B cell (primary cell): ENCODE measurements at regions of chrX and their contacts with region 1.

Region 1: GRCh38 chrX:23742697-23743622 is at the start of gene ACOT9:
- DNase-seq: peak; percentile 86
- ATAC-seq: peak; percentile 95
- H3K4me3 ChIP-seq: peak within 1 kb of the TSS; percentile 36 to 80 (median 75)
- H3K4me3 Mint-ChIP-seq: peak within 1 kb of the TSS; percentile 91
- H3K27ac ChIP-seq: peak within 1 kb of the TSS; percentile 86 to 87
- H3K27ac Mint-ChIP-seq: peak within 1 kb of the TSS; percentile 90
- H3K4me1 ChIP-seq: peaks cover 3 to 12% of the 10 kb centered on the region in 2 donors
- H3K4me1 Mint-ChIP-seq: peaks cover 31% of the 10 kb centered on the region
- H3K27me3 ChIP-seq: no peaks in the 10 kb centered on the region
- H3K27me3 Mint-ChIP-seq: no peaks in the 10 kb centered on the region
- CTCF ChIP-seq: no peak
- total RNA-seq, gene ACOT9: 31.3 and 33.6 TPM in 2 replicates

Region 2: DNA sequence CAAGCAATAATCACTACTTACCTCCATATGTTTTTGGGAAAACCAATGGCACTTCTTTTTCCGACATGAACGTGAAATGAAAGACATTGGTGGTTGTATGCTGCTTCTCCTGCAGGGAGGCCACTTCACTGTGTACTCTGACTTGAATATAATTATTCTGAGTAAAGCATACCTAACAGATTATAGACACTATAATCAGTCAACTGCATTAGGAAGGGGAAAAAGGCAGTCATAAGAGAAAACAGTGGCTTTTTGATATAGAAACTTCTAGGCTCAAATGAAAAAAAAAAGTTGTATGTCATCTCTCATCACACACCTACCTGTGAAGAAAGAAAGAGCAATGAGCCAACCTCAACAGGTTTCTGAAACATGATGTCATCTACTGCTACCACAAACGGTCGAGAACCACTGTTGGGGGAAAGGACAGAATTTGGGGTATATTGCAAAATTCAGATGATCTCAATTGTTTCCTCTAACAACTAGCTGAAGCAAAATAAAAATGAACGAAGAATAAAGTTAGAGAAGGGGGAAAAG is 38.2 kb before region 1 on chrX:
- CTCF ChIA-PET with region 1: no interaction called
- POLR2A ChIA-PET with region 1: no interaction called
- intact Hi-C with region 1: no loop called
- DNase-seq: no peak
- ATAC-seq: no peak
- H3K4me3 ChIP-seq: no peak overlapping the region
- H3K4me3 Mint-ChIP-seq: no peak overlapping the region
- H3K27ac ChIP-seq: no peak overlapping the region
- H3K27ac Mint-ChIP-seq: no peak overlapping the region
- H3K4me1 ChIP-seq: no peaks in the 10 kb centered on the region
- H3K4me1 Mint-ChIP-seq: no peaks in the 10 kb centered on the region
- H3K27me3 ChIP-seq: no peaks in the 10 kb centered on the region
- H3K27me3 Mint-ChIP-seq: no peaks in the 10 kb centered on the region
- CTCF ChIP-seq: no peak

Region 3: GRCh38 chrX:23756157-23756559 is 13.2 kb after region 1 on chrX:
- CTCF ChIA-PET with region 1: interaction called, 5 read pairs
- POLR2A ChIA-PET with region 1: no interaction called
- intact Hi-C with region 1: loop called (anchors 1 kb)
- DNase-seq: peak; percentile 80
- ATAC-seq: peak; percentile 41
- H3K4me3 ChIP-seq: no peak overlapping the region
- H3K4me3 Mint-ChIP-seq: peak overlapping the region; percentile 45
- H3K27ac ChIP-seq: no peak overlapping the region
- H3K27ac Mint-ChIP-seq: peak overlapping the region; percentile 56
- H3K4me1 ChIP-seq: peaks cover 0 to 3% of the 10 kb centered on the region in 2 donors
- H3K4me1 Mint-ChIP-seq: peaks cover 3% of the 10 kb centered on the region
- H3K27me3 ChIP-seq: no peaks in the 10 kb centered on the region
- H3K27me3 Mint-ChIP-seq: no peaks in the 10 kb centered on the region
- CTCF ChIP-seq: peak; percentile 62

Region 4: DNA sequence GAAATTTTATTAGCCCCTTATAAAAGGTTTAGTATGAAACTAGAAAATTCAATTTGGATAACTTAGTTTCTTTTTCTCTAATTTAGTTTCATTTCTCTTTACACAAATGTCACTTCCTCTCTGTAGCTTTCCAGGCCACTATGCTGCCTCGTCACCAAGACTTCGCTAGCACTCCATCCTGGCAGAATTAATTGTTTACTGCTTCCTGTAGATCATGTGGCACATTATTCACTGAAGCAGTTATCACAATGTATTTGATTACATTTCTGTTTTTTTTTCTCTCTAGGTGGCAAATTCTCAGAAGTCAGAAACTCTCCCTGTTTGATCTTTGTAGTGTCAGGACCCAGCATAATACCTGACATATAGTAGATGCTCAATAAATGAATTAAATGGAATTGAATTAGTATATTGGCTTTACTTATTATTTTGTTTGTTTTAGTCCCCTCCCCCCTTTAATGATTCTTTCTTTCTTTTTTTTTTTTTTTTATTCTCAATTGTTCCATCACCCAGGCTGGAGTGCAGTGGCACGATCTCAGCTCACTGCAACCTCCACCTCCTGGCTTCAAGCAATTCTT is 30.7 kb after region 1 on chrX:
- CTCF ChIA-PET with region 1: no interaction called
- POLR2A ChIA-PET with region 1: no interaction called
- intact Hi-C with region 1: loop called (anchors 1 kb)
- DNase-seq: peak; percentile 83
- ATAC-seq: peak; percentile 92
- H3K4me3 ChIP-seq: peak overlapping the region in 1 of 5 experiments; percentile 33
- H3K4me3 Mint-ChIP-seq: peak overlapping the region; percentile 71
- H3K27ac ChIP-seq: peak overlapping the region; percentile 85 to 89
- H3K27ac Mint-ChIP-seq: peak overlapping the region; percentile 89
- H3K4me1 ChIP-seq: peaks cover 16 to 27% of the 10 kb centered on the region in 2 donors
- H3K4me1 Mint-ChIP-seq: peaks cover 16% of the 10 kb centered on the region
- H3K27me3 ChIP-seq: no peaks in the 10 kb centered on the region
- H3K27me3 Mint-ChIP-seq: no peaks in the 10 kb centered on the region
- CTCF ChIP-seq: no peak

Region 5: GRCh38 chrX:23911126-23911835 is 168.3 kb after region 1 on chrX:
- CTCF ChIA-PET with region 1: no interaction called
- POLR2A ChIA-PET with region 1: no interaction called
- intact Hi-C with region 1: no loop called
- DNase-seq: no peak
- ATAC-seq: no peak
- H3K4me3 ChIP-seq: no peak overlapping the region
- H3K4me3 Mint-ChIP-seq: no peak overlapping the region
- H3K27ac ChIP-seq: no peak overlapping the region
- H3K27ac Mint-ChIP-seq: no peak overlapping the region
- H3K4me1 ChIP-seq: peaks cover 4 to 15% of the 10 kb centered on the region in 2 donors
- H3K4me1 Mint-ChIP-seq: peaks cover 16% of the 10 kb centered on the region
- H3K27me3 ChIP-seq: no peaks in the 10 kb centered on the region
- H3K27me3 Mint-ChIP-seq: no peaks in the 10 kb centered on the region
- CTCF ChIP-seq: no peak

Region 6: GRCh38 chrX:24024819-24025740 is 282.1 kb after region 1 on chrX:
- CTCF ChIA-PET with region 1: no interaction called
- POLR2A ChIA-PET with region 1: no interaction called
- intact Hi-C with region 1: loop called (anchors 10 kb)
- DNase-seq: peak; percentile 88
- ATAC-seq: peak; percentile 89
- H3K4me3 ChIP-seq: peak overlapping the region; percentile 54 to 81 (median 79)
- H3K4me3 Mint-ChIP-seq: peak overlapping the region; percentile 85
- H3K27ac ChIP-seq: peak overlapping the region; percentile 77 to 93
- H3K27ac Mint-ChIP-seq: peak overlapping the region; percentile 82
- H3K4me1 ChIP-seq: peaks cover 4 to 10% of the 10 kb centered on the region in 2 donors
- H3K4me1 Mint-ChIP-seq: peaks cover 36% of the 10 kb centered on the region
- H3K27me3 ChIP-seq: no peaks in the 10 kb centered on the region
- H3K27me3 Mint-ChIP-seq: no peaks in the 10 kb centered on the region
- CTCF ChIP-seq: no peak

Region 7: GRCh38 chrX:24054182-24055042 is 311.5 kb after region 1 on chrX and contains the start of gene EIF2S3:
- CTCF ChIA-PET with region 1: no interaction called
- POLR2A ChIA-PET with region 1: interaction called, 10 read pairs
- intact Hi-C with region 1: loop called (anchors 5 kb)
- DNase-seq: peak; percentile 95
- ATAC-seq: peak; percentile 80
- H3K4me3 ChIP-seq: peak within 1 kb of the TSS; percentile 76 to 98 (median 89)
- H3K4me3 Mint-ChIP-seq: peak within 1 kb of the TSS; percentile 99
- H3K27ac ChIP-seq: no peak within 1 kb of the TSS
- H3K27ac Mint-ChIP-seq: peak within 1 kb of the TSS; percentile 100
- H3K4me1 ChIP-seq: no peaks in the 10 kb centered on the region
- H3K4me1 Mint-ChIP-seq: peaks cover 3% of the 10 kb centered on the region
- H3K27me3 ChIP-seq: no peaks in the 10 kb centered on the region
- H3K27me3 Mint-ChIP-seq: no peaks in the 10 kb centered on the region
- CTCF ChIP-seq: peak; percentile 71
- total RNA-seq, gene EIF2S3: 260 and 272 TPM in 2 replicates